GM12878 (cell line): ENCODE measurements at regions of chr2 and their contacts with region 1.

Region 1: DNA sequence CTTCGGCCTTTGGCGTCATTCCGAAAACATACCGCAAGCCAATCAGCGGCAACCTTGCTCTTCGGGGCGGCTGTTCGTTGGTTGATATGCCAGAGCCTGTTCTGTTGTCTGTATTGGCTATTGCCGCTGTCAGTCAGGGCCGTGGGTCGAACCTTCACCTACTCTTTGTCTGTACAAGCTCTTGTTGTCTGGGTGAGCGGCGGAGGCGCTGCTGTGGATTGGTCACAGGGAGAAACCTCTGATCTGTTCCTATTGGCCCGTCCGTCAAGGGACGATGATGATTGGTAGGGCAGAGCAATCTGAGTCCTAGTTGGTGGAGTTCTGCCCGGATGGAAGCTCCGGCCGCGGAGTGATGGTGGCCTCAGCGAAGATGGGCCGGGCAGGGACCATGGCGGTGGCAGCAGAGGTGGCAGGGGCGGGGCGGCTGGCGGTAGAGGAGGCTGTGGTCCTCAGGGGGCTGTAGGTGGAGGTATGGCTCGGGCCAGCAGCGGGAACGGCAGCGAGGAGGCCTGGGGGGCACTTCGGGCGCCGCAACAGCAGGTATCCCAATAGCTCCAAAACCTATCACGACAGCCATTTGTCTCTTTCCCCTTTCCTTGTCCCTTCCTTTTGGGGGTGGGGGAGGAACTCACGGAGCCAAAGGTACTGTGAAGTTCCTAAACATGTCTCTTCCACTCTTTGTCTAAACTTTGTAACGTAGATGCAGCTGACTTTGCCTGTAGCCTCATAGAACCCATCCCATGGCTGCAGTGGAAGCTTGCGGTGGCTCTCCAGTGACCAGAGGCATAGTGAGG is at the start of gene WBP1:
- DNase-seq: peak; percentile 100
- ATAC-seq: peak; percentile 90
- H3K4me3 ChIP-seq: peak within 1 kb of the TSS; percentile 99
- H3K27ac ChIP-seq: peak within 1 kb of the TSS; percentile 96
- H3K4me1 ChIP-seq: peaks cover 19% of the 10 kb centered on the region
- H3K27me3 ChIP-seq: no peaks in the 10 kb centered on the region
- CTCF ChIP-seq: no peak
- EP300 ChIP-seq: no peak
- POLR2A ChIP-seq: peak; percentile 68
- RAD21 ChIP-seq: no peak
- polyA plus RNA-seq, gene WBP1: 4.2 to 11.5 TPM

Region 2: DNA sequence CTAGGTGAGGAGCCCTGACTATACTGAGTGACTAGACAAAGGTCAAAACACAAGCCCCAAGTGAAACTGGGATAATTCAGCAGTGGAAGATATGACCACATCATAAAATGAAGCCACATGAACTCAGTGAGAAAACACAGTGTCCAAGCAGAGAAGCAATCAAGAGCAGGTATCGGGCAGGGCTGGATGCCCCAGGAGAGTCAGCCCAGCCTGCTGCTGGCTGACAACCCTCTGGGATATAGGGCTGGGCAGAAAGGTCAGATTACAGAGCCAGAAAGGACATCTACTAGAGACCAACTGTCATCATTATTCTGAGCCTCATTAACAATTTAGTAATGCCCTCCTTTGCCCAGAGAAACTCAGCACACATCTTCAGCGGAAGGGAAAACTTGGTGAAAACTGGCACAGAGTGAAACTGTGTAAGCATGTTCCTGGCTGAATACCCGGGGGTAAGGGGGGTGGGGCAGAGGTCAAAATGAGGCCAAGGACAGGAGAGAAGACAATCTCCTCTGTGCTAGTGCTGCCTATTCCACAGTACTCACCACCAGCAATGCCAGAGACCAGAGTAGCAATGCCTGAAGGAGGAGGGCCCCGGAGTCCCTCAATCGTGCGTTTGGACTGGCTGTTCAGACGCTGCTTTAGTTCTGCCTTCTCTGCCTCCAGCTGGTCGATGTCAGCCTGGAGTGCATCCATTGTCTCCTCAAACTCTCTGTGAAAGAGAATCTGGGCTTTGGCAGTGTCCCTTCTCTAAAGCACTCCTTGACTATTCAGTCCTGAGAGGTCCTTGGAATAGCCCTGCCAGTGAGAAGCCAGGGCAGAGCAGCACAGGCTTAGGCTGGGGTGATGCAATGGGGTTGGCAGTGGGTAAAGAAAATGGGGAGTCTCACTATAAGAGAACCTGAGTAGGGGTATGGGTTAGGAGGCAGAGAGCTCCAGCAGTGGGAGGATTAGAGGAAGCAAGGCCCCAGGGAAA is 93.5 kb before region 1 on chr2:
- CTCF ChIA-PET with region 1: no interaction called
- POLR2A ChIA-PET with region 1: no interaction called
- RAD21 ChIA-PET with region 1: no interaction called
- SMC1A ChIA-PET with region 1: no interaction called
- in situ Hi-C with region 1: no loop called
- intact Hi-C with region 1: no loop called
- DNase-seq: no peak
- ATAC-seq: no peak
- H3K4me3 ChIP-seq: no peak overlapping the region
- H3K27ac ChIP-seq: no peak overlapping the region
- H3K4me1 ChIP-seq: no peaks in the 10 kb centered on the region
- H3K27me3 ChIP-seq: no peaks in the 10 kb centered on the region
- CTCF ChIP-seq: no peak
- EP300 ChIP-seq: no peak
- POLR2A ChIP-seq: no peak
- RAD21 ChIP-seq: no peak

Region 3: GRCh38 chr2:74391580-74392448 is 66.5 kb before region 1 on chr2:
- CTCF ChIA-PET with region 1: interaction called, 11 read pairs
- POLR2A ChIA-PET with region 1: interaction called, 3 read pairs
- RAD21 ChIA-PET with region 1: interaction called, 5 read pairs
- SMC1A ChIA-PET with region 1: interaction called, 6 read pairs
- in situ Hi-C with region 1: no loop called
- intact Hi-C with region 1: no loop called
- DNase-seq: peak; percentile 76
- ATAC-seq: peak; percentile 89
- H3K4me3 ChIP-seq: peak overlapping the region; percentile 88
- H3K27ac ChIP-seq: peak overlapping the region; percentile 98
- H3K4me1 ChIP-seq: peaks cover 3% of the 10 kb centered on the region; the same call in 1 of the 2 replicates
- H3K27me3 ChIP-seq: no peaks in the 10 kb centered on the region
- CTCF ChIP-seq: peak; percentile 97 to 99 (median 98); a peak in 5 of 6 replicates
- EP300 ChIP-seq: no peak
- POLR2A ChIP-seq: peak; percentile 83
- RAD21 ChIP-seq: peak; percentile 59

Region 4: DNA sequence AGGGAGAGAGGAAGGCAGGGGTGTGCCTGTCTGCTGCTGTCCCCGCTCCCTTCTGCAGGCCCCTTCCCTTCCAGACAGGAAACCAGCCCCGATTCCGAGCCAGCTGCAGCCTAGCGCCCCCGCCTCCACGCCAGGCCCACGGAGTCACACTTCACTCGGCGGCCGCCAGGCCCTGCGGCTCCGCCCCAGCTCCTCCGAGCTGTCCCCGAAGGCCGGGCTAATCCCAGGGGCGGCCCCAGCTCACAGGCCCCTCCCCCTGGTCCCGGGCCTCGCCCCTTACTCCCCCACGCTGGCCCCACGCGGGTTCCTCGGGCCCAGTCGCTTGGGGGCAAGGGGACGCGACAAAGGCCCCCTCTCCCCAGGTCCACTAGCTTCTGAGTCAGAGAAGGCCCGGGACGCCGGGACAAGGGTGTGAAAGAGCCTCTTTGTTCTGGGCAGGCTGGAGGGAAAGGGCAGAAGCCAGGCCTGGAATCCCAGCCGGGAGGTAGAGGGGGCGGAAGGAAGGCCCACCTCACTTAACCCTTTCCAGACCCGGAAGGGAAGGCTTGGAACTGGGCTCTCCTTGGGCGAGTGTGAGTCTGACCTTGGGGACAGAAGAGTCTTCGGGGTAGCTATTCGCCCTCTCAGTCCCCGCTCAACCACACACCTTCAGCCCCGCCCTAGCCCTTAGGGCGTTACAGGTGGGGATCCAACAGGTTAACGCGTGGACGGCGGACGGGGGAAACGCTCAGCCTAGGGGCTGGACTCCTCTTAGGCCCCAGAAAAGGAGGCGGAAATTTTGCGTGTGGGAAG is 17.8 kb before region 1 on chr2:
- CTCF ChIA-PET with region 1: interaction called, 12 read pairs
- POLR2A ChIA-PET with region 1: interaction called, 29 read pairs
- RAD21 ChIA-PET with region 1: interaction called, 13 read pairs
- SMC1A ChIA-PET with region 1: interaction called, 9 read pairs
- in situ Hi-C with region 1: no loop called
- intact Hi-C with region 1: no loop called
- DNase-seq: no peak
- ATAC-seq: peak; percentile 98
- H3K4me3 ChIP-seq: peak overlapping the region; percentile 61; the same call in 1 of the 2 replicates
- H3K27ac ChIP-seq: 0 out of 2 replicates have a peak overlapping the region, but pooled peaks have one; percentile 2
- H3K4me1 ChIP-seq: peaks cover 23% of the 10 kb centered on the region
- H3K27me3 ChIP-seq: peaks cover 2 to 10% of the 10 kb centered on the region in 2 experiments; a peak in 3 of 4 replicates
- CTCF ChIP-seq: peak in 2 of 3 experiments; percentile 19 to 38; a peak in 3 of 6 replicates
- EP300 ChIP-seq: no peak
- POLR2A ChIP-seq: peak; percentile 77
- RAD21 ChIP-seq: no peak

Region 5: DNA sequence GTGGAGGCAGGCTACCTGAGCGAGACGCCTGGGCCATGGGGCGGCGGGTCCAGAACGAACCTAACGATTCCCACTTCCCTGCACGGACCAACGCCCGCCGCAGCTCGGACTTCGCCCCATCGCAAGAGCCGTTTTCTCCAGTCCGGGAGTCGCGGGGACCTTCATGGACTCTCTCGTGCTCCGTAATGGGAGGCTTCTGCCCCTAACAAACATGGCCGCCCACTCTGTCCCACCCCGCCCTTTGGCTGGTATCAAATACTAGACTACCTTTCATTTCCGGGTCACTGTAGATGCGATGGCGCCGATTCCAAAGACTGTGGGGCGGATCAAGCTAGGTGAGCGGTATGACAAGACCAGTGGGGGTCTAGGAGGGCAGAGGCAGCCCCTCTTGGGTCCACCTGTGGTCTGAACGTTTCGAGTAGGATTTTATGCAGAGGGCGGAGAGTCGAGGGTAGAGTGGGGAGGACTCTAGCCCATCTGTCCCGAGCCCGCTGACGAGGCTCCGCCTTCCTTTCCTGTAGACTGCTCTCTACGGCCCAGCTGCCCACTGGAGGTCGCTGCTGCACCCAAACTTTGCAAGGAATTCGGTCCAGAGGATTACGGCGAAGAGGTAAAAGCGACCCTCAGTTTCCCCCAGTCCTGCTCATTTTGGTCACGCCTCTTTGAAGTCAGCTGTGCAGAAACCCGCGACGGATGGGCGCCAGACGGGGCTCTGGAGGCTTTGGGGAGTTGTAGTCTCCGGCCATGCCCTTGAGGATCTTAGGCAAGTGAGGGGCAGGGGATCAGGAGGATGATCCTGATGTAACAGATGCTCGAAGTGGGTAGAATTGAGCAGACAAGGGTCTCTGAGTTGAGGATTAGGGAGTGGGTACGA is 24.7 kb after region 1 on chr2 and contains the starts of genes CCDC142 and TTC31:
- CTCF ChIA-PET with region 1: interaction called, 54 read pairs
- POLR2A ChIA-PET with region 1: interaction called, 44 read pairs
- RAD21 ChIA-PET with region 1: interaction called, 21 read pairs
- SMC1A ChIA-PET with region 1: interaction called, 8 read pairs
- in situ Hi-C with region 1: no loop called
- intact Hi-C with region 1: loop called (anchors 1 kb)
- DNase-seq: peak; percentile 89
- ATAC-seq: peak; percentile 95
- H3K4me3 ChIP-seq: peak within 1 kb of the TSS; percentile 97
- H3K27ac ChIP-seq: peak within 1 kb of the TSS; percentile 96
- H3K4me1 ChIP-seq: peaks cover 13% of the 10 kb centered on the region
- H3K27me3 ChIP-seq: no peaks in the 10 kb centered on the region; a peak in 1 of 4 replicates
- CTCF ChIP-seq: peak; percentile 93 to 97 (median 97)
- EP300 ChIP-seq: no peak
- POLR2A ChIP-seq: peak; percentile 83
- RAD21 ChIP-seq: peak; percentile 78
- polyA plus RNA-seq, gene CCDC142: 0.93 to 1.5 TPM
- polyA plus RNA-seq, gene TTC31: 6.5 to 7.2 TPM

Region 6: GRCh38 chr2:74529357-74530238 is 71.3 kb after region 1 on chr2 and contains the starts of genes AUP1 and HTRA2:
- CTCF ChIA-PET with region 1: interaction called, 10 read pairs
- POLR2A ChIA-PET with region 1: interaction called, 12 read pairs
- RAD21 ChIA-PET with region 1: interaction called, 11 read pairs
- SMC1A ChIA-PET with region 1: interaction called, 11 read pairs
- in situ Hi-C with region 1: no loop called
- intact Hi-C with region 1: loop called (anchors 1 kb)
- DNase-seq: peak; percentile 96
- ATAC-seq: peak; percentile 90
- H3K4me3 ChIP-seq: peak within 1 kb of the TSS; percentile 94
- H3K27ac ChIP-seq: peak within 1 kb of the TSS; percentile 96
- H3K4me1 ChIP-seq: peaks cover 33% of the 10 kb centered on the region
- H3K27me3 ChIP-seq: no peaks in the 10 kb centered on the region
- CTCF ChIP-seq: no peak
- EP300 ChIP-seq: no peak
- POLR2A ChIP-seq: peak; percentile 84
- RAD21 ChIP-seq: no peak
- polyA plus RNA-seq, gene AUP1: 39.1 to 56.5 TPM
- polyA plus RNA-seq, gene HTRA2: 42.3 to 46.4 TPM